ENCODE measurements at regions of chr11 and their contacts with region 1.

Region 1: DNA sequence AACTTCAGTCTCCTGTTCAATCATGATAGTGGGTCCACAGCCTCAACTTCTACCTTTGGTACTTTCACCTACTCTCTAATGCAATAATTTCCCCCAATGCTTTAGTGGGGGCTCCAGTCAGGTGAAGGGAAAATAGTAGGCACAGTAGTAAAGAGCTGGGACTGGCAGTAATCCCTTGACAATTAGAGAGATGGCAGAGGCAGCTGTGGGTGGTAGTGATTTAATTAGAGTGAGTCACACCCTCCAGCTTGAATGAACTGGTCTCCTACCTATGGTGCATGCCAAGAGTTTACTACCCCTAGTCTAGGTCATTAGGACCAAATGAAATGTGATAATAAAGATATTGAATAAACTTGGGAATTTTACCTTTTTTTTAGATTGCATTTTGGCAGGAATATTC is 8.8 kb downstream of the PRRG4 start:
- DNase-seq: no peak
- H3K4me3 Mint-ChIP-seq: no peak overlapping the region
- H3K27ac Mint-ChIP-seq: no peak overlapping the region
- H3K4me1 Mint-ChIP-seq: no peaks in the 10 kb centered on the region
- H3K27me3 Mint-ChIP-seq: peaks cover 6% of the 10 kb centered on the region

Region 2: DNA sequence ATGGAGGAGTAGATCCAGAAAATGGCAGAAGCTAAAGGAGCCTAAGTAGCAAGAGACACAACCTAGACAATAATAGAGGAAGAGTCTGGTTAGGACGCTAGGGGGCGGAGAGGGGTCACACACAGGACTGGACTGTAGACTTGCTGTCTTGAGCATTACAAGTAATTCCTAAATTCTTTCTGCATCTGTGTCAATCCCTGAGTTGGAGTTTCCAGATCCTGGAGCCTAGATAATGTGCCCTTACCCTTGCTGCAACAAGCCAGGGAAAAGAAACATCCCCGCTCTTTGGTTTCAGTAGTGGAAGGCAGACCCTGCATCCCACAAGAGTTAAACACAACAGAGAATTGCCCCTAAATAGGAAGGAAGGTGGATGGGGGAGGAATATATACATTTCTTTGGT is 29.2 kb before region 1 on chr11:
- intact Hi-C with region 1: loop called (anchors 5 kb)
- DNase-seq: peak; percentile 27
- H3K4me3 Mint-ChIP-seq: no peak overlapping the region
- H3K27ac Mint-ChIP-seq: no peak overlapping the region
- H3K4me1 Mint-ChIP-seq: no peaks in the 10 kb centered on the region
- H3K27me3 Mint-ChIP-seq: peaks cover 8% of the 10 kb centered on the region